ENCODE measurements at regions of chr9 and their contacts with region 1.

Region 1: DNA sequence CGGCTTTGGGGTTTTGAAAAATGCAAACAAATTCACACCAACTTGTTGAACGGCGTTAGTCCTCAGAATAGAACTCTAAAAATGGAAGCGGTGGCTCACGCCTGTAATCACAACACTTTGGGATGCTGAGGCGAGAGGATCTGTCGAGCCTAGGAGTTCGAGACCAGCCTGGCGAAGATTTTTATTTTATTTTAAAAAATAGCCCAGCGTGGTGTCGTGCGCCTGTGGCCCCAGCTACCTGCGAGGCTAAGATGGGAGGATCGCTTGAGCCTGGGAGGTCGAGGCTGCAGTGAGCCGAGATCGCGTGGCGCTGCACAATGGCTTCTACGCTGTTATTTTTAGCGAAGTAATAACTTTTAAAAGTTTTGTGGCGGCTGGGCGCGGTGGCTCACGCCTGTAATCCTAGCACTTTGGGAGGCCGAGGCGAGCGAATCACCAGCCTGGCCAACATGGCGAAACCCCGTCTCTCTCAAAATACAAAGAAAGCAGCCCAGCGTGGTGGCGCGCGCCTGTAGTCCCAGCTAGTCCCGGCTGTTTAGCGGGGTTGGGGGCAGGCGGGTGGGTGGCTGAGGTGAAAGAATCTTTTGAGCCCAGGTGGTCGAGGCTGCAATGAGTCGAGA is 699 bp upstream of the PLIN2 start:
- DNase-seq: peak in 1 of 2 experiments; percentile 65
- H3K4me3 ChIP-seq: peak overlapping the region; percentile 83 to 98 (median 86)
- H3K27ac ChIP-seq: peak overlapping the region; percentile 75
- H3K4me1 ChIP-seq: peaks cover 8 to 16% (median 9%) of the 10 kb centered on the region in 4 experiments
- H3K27me3 ChIP-seq: no peaks in the 10 kb centered on the region
- CTCF ChIP-seq: no peak
- EP300 ChIP-seq: no peak
- POLR2A ChIP-seq: peak in 1 of 2 experiments; percentile 70; a peak in 2 of 3 replicates
- RAD21 ChIP-seq: no peak

Region 2: GRCh38 chr9:19048966-19049916 is 78.8 kb before region 1 on chr9 and contains the start of gene RRAGA:
- CTCF ChIA-PET with region 1: interaction called, 3 read pairs
- POLR2A ChIA-PET with region 1: interaction called, 10 read pairs
- DNase-seq: peak; percentile 93 to 97
- H3K4me3 ChIP-seq: peak within 1 kb of the TSS; percentile 76 to 92 (median 82)
- H3K27ac ChIP-seq: peak within 1 kb of the TSS; percentile 93
- H3K4me1 ChIP-seq: no peaks in the 10 kb centered on the region
- H3K27me3 ChIP-seq: no peaks in the 10 kb centered on the region
- CTCF ChIP-seq: peak; percentile 74 to 91 (median 75)
- EP300 ChIP-seq: no peak; a peak in 1 of 3 replicates
- POLR2A ChIP-seq: peak; percentile 96 to 98
- RAD21 ChIP-seq: peak; percentile 32 to 56; a peak in 3 of 4 replicates
- total RNA-seq, gene RRAGA: 46.2 and 46.5 TPM in 2 replicates

Region 3: DNA sequence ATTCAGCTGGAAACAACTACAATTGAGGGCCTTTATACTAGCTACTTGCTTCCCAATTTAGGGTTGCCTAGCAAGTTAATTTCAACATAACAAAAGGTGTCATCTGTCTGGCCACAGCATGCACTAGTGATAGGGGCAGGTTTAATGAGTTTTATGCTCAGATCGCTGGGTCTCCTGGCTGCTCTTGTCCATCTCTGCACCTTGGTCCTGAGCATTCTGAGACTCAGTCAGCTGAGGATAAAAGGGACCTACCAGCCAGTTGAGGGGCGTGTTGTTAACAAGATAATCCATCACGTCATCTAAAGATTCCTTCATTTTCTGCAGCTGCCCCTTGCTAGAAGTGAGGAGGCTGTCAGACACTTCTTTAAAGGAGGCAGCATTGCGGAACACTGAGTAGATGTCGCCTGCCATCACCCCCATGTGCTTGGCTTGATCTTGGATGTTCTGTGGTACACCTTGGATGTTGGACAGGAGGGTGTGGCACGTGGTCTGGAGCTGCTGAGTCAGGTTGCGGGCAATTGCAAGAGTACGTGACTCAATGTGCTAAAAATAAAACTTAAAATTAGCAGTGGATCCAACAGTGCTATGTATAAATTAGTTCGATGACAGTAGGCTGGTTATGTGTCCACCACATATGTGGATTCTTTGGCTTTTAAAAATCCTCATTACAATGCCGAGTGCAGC is 11.7 kb before region 1 on chr9:
- CTCF ChIA-PET with region 1: interaction called, 6 read pairs
- POLR2A ChIA-PET with region 1: interaction called, 20 read pairs
- DNase-seq: no peak
- H3K4me3 ChIP-seq: no peak overlapping the region
- H3K27ac ChIP-seq: no peak overlapping the region
- H3K4me1 ChIP-seq: 0 out of 7 replicates have a peak, but pooled peaks cover 0 to 1% (median 0%) of the 10 kb centered on the region in 4 experiments
- H3K27me3 ChIP-seq: no peaks in the 10 kb centered on the region
- CTCF ChIP-seq: no peak
- EP300 ChIP-seq: no peak
- POLR2A ChIP-seq: no peak
- RAD21 ChIP-seq: no peak